H1 (cell line): ENCODE measurements at regions of chr3 and their contacts with region 1.

Region 1: DNA sequence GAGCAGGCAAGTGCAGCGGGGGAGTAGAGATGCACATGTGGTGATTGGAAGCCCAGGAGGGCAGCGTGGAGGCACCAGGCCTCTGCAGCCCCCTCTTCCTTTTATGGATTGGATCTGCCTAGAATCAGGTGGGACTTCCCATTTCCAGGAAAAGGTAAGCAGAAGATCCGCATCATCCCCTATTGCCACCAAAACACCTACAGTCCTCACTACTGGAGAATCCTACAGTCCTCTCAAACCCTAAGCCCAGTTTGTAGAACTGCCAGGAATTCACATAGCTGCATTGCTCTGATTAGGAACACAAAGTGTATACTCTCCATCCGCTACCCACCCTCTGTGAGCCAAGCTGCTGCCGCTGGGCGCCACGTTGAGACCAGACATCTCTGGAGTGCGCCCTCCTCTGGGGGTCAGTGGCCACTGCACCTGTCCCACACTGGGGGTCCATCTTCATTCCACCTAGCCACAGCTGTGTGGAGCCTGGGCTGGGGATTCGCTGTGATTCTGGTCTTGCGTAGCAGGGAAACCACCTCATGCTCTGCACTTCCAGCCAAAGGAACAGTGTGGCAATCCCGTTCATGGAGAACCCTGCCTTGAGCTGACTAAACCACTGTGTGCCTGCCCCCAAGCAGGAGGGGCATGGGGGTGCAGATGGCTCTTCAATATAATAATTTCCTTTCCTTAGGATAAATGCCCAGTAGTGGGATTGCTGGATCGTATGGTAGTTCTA is 88.9 kb upstream of the PTX3 start:
- DNase-seq: peak; percentile 43 to 95
- H3K4me3 ChIP-seq: no peak overlapping the region
- H3K27ac ChIP-seq: no peak overlapping the region
- H3K4me1 ChIP-seq: no peaks in the 10 kb centered on the region; a peak in 1 of 7 replicates
- H3K27me3 ChIP-seq: no peaks in the 10 kb centered on the region
- CTCF ChIP-seq: peak; percentile 88 to 99 (median 97)
- EP300 ChIP-seq: no peak
- POLR2A ChIP-seq: no peak
- RAD21 ChIP-seq: peak; percentile 70 to 81

Region 2: GRCh38 chr3:157107644-157108133 is 240.1 kb before region 1 on chr3:
- CTCF ChIA-PET with region 1: no interaction called
- POLR2A ChIA-PET with region 1: no interaction called
- DNase-seq: no peak
- H3K4me3 ChIP-seq: no peak overlapping the region
- H3K27ac ChIP-seq: no peak overlapping the region
- H3K4me1 ChIP-seq: peaks cover 0 to 9% (median 4%) of the 10 kb centered on the region in 4 experiments; a peak in 4 of 7 replicates
- H3K27me3 ChIP-seq: no peaks in the 10 kb centered on the region
- CTCF ChIP-seq: no peak
- EP300 ChIP-seq: no peak
- POLR2A ChIP-seq: no peak
- RAD21 ChIP-seq: no peak

Region 3: GRCh38 chr3:157239082-157239704 is 108.5 kb before region 1 on chr3:
- CTCF ChIA-PET with region 1: interaction called, 14 read pairs
- POLR2A ChIA-PET with region 1: no interaction called
- DNase-seq: peak; percentile 34 to 86
- H3K4me3 ChIP-seq: no peak overlapping the region
- H3K27ac ChIP-seq: no peak overlapping the region
- H3K4me1 ChIP-seq: no peaks in the 10 kb centered on the region
- H3K27me3 ChIP-seq: no peaks in the 10 kb centered on the region
- CTCF ChIP-seq: peak; percentile 88 to 95 (median 94)
- EP300 ChIP-seq: no peak
- POLR2A ChIP-seq: no peak
- RAD21 ChIP-seq: peak; percentile 94

Region 4: DNA sequence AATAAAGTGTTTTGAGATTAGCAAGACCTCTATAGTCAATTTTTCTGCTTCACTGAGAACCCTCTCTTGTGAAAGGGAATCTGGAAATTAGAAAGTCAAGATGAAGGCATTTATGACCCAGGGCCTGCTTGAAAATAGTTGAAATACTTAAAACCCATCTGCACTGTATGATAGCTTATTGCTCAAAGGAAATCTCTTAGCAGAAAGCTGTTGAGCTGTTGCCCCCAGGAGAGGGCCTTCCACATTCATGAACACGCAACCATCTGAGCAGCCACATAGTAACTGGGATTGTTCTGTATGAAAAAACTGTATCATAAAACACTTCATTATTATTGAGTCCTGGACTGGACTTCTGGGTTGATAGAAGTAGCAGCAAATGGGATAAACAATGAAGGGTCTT is 17.5 kb before region 1 on chr3:
- CTCF ChIA-PET with region 1: interaction called, 13 read pairs
- POLR2A ChIA-PET with region 1: no interaction called
- DNase-seq: no peak
- H3K4me3 ChIP-seq: no peak overlapping the region
- H3K27ac ChIP-seq: no peak overlapping the region
- H3K4me1 ChIP-seq: peaks cover 0 to 5% (median under 1%) of the 10 kb centered on the region in 4 experiments; a peak in 5 of 7 replicates
- H3K27me3 ChIP-seq: no peaks in the 10 kb centered on the region
- CTCF ChIP-seq: no peak
- EP300 ChIP-seq: no peak
- POLR2A ChIP-seq: no peak
- RAD21 ChIP-seq: no peak

Region 5: GRCh38 chr3:157475921-157476414 is 128.2 kb after region 1 on chr3:
- CTCF ChIA-PET with region 1: no interaction called
- POLR2A ChIA-PET with region 1: no interaction called
- DNase-seq: no peak
- H3K4me3 ChIP-seq: no peak overlapping the region
- H3K27ac ChIP-seq: no peak overlapping the region
- H3K4me1 ChIP-seq: peaks cover 0 to 4% (median 0%) of the 10 kb centered on the region in 4 experiments; a peak in 1 of 7 replicates
- H3K27me3 ChIP-seq: no peaks in the 10 kb centered on the region
- CTCF ChIP-seq: no peak
- EP300 ChIP-seq: no peak
- POLR2A ChIP-seq: no peak
- RAD21 ChIP-seq: no peak